Caco-2 (cell line): ENCODE measurements at regions of chr2 and their contacts with region 1.

Region 1: DNA sequence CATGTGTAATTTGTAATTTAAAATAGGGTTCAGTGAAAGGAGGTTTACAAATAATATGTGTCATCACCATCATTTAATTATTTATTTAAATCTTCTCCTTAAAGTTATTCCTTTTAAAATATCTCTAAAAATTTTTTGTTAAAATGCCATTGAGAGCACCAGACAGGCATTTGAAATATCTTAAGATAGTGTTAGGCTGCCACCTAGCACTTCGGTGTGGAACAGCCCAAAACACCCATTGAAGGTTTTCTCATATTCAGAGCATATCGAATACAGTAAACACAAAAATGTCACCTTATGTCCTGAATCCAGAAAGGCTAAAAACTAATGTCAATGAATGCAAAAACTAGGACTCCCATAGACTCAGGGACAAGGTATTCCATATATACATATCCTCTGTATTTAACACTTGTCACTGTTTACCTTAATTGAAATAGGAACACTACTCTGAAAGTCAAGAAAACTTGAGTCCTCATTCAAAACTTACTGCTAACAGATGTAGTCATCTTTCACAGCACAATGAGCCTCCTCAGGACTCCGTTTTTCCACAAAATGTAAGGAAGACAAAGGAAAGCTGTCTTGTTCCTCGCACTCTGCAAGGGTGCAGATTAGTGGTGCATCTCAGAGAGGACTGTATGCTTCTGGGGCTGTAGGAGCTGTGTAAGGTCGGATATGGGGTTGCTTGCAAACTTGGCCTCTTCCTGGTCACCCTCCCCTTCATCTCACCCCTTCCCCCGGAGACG is 329.5 kb downstream of the PAX3 start:
- DNase-seq: peak in 1 of 2 experiments; percentile 67
- H3K4me3 ChIP-seq: no peak overlapping the region
- H3K4me3 Mint-ChIP-seq: no peak overlapping the region
- H3K27ac Mint-ChIP-seq: no peak overlapping the region
- H3K4me1 ChIP-seq: no peaks in the 10 kb centered on the region
- H3K4me1 Mint-ChIP-seq: no peaks in the 10 kb centered on the region
- H3K27me3 ChIP-seq: no peaks in the 10 kb centered on the region
- H3K27me3 Mint-ChIP-seq: no peaks in the 10 kb centered on the region
- CTCF ChIP-seq: peak; percentile 84 to 87

Region 2: GRCh38 chr2:220687231-220687843 is 1281.9 kb before region 1 on chr2:
- CTCF ChIA-PET with region 1: no interaction called
- POLR2A ChIA-PET with region 1: no interaction called
- intact Hi-C with region 1: loop called (anchors 1 kb)
- DNase-seq: peak; percentile 69 to 77
- H3K4me3 ChIP-seq: no peak overlapping the region
- H3K4me3 Mint-ChIP-seq: no peak overlapping the region
- H3K27ac Mint-ChIP-seq: no peak overlapping the region
- H3K4me1 ChIP-seq: no peaks in the 10 kb centered on the region
- H3K4me1 Mint-ChIP-seq: no peaks in the 10 kb centered on the region
- H3K27me3 ChIP-seq: no peaks in the 10 kb centered on the region
- H3K27me3 Mint-ChIP-seq: peaks cover 10% of the 10 kb centered on the region
- CTCF ChIP-seq: peak; percentile 92 to 98

Region 3: GRCh38 chr2:221455214-221455613 is 514.0 kb before region 1 on chr2:
- CTCF ChIA-PET with region 1: no interaction called
- POLR2A ChIA-PET with region 1: no interaction called
- intact Hi-C with region 1: loop called (anchors 5 kb)
- DNase-seq: no peak
- H3K4me3 ChIP-seq: no peak overlapping the region
- H3K4me3 Mint-ChIP-seq: no peak overlapping the region
- H3K27ac Mint-ChIP-seq: no peak overlapping the region
- H3K4me1 ChIP-seq: no peaks in the 10 kb centered on the region
- H3K4me1 Mint-ChIP-seq: no peaks in the 10 kb centered on the region
- H3K27me3 ChIP-seq: no peaks in the 10 kb centered on the region
- H3K27me3 Mint-ChIP-seq: no peaks in the 10 kb centered on the region
- CTCF ChIP-seq: no peak

Region 4: DNA sequence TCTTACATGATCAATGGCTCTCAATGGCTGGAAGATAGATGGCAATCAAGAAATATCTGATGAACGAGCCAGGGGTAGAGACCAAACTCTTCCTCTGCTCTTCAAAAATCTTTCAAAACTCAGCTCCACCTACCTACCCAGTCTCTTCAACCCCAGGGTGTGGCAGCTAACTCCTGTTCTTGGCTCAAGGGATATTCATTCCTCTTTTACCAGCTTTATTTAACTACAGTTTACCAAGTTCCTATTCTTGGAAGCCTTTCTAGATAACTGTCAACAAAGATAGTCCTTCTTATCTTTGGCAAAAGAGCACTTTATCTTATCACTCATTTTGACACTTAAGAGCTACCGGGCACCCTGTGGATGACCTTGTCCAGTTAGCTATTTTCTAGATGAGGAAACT is 433.4 kb before region 1 on chr2:
- CTCF ChIA-PET with region 1: no interaction called
- POLR2A ChIA-PET with region 1: no interaction called
- intact Hi-C with region 1: loop called (anchors 1 kb)
- DNase-seq: peak; percentile 83 to 84
- H3K4me3 ChIP-seq: no peak overlapping the region
- H3K4me3 Mint-ChIP-seq: peak overlapping the region; percentile 30
- H3K27ac Mint-ChIP-seq: peak overlapping the region; percentile 23
- H3K4me1 ChIP-seq: peaks cover 58% of the 10 kb centered on the region
- H3K4me1 Mint-ChIP-seq: peaks cover 60% of the 10 kb centered on the region
- H3K27me3 ChIP-seq: no peaks in the 10 kb centered on the region
- H3K27me3 Mint-ChIP-seq: no peaks in the 10 kb centered on the region
- CTCF ChIP-seq: no peak

Region 5: GRCh38 chr2:221731443-221732145 is 237.7 kb before region 1 on chr2:
- CTCF ChIA-PET with region 1: no interaction called
- POLR2A ChIA-PET with region 1: no interaction called
- intact Hi-C with region 1: loop called (anchors 5 kb)
- DNase-seq: peak; percentile 83 to 90
- H3K4me3 ChIP-seq: no peak overlapping the region
- H3K4me3 Mint-ChIP-seq: peak overlapping the region; percentile 48
- H3K27ac Mint-ChIP-seq: peak overlapping the region; percentile 89
- H3K4me1 ChIP-seq: peaks cover 26% of the 10 kb centered on the region
- H3K4me1 Mint-ChIP-seq: peaks cover 23% of the 10 kb centered on the region
- H3K27me3 ChIP-seq: no peaks in the 10 kb centered on the region
- H3K27me3 Mint-ChIP-seq: no peaks in the 10 kb centered on the region
- CTCF ChIP-seq: no peak

Region 6: GRCh38 chr2:221943076-221943810 is 26.0 kb before region 1 on chr2:
- CTCF ChIA-PET with region 1: no interaction called
- POLR2A ChIA-PET with region 1: no interaction called
- intact Hi-C with region 1: no loop called
- DNase-seq: no peak
- H3K4me3 ChIP-seq: no peak overlapping the region
- H3K4me3 Mint-ChIP-seq: no peak overlapping the region
- H3K27ac Mint-ChIP-seq: no peak overlapping the region
- H3K4me1 ChIP-seq: no peaks in the 10 kb centered on the region
- H3K4me1 Mint-ChIP-seq: no peaks in the 10 kb centered on the region
- H3K27me3 ChIP-seq: no peaks in the 10 kb centered on the region
- H3K27me3 Mint-ChIP-seq: no peaks in the 10 kb centered on the region
- CTCF ChIP-seq: no peak

Region 7: GRCh38 chr2:222451224-222451674 is 482.0 kb after region 1 on chr2:
- CTCF ChIA-PET with region 1: no interaction called
- POLR2A ChIA-PET with region 1: no interaction called
- intact Hi-C with region 1: no loop called
- DNase-seq: no peak
- H3K4me3 ChIP-seq: no peak overlapping the region
- H3K4me3 Mint-ChIP-seq: no peak overlapping the region
- H3K27ac Mint-ChIP-seq: no peak overlapping the region
- H3K4me1 ChIP-seq: no peaks in the 10 kb centered on the region
- H3K4me1 Mint-ChIP-seq: no peaks in the 10 kb centered on the region
- H3K27me3 ChIP-seq: no peaks in the 10 kb centered on the region; the same call in 1 of the 2 replicates
- H3K27me3 Mint-ChIP-seq: peaks cover 16% of the 10 kb centered on the region
- CTCF ChIP-seq: no peak